Pancreas (tissue), 10 donors: ENCODE measurements at regions of chr15 and their contacts with region 1.

Region 1: DNA sequence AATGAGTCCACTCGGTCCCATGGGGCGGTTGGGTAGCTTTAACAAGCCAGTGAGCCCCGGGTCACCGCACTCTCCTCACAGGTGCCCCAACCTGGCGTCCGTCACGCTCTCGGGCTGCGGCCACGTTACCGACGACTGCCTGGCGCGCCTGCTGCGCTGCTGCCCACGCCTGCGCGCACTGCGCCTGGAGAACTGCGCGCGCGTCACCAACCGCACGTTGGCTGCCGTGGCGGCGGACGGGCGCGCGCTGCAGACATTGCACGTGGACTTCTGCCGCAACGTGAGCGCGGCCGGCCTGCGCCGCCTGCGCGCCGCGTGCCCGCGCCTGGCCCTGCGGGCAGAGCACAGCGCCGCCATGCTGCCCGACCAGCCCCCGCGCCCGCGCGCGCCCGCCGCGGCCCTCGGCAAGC is 3.4 kb downstream of the FBXL22 start:
- DNase-seq: peak; percentile 87 to 97 (median 93)
- ATAC-seq: peak; percentile 71 to 86 (median 81)
- H3K4me3 ChIP-seq: peak overlapping the region; percentile 64 to 86 (median 65)
- H3K27ac ChIP-seq: peak overlapping the region; percentile 83 to 94 (median 91)
- H3K4me1 ChIP-seq: peaks cover 0 to 10% (median 4%) of the 10 kb centered on the region in 3 donors
- H3K27me3 ChIP-seq: no peaks in the 10 kb centered on the region
- CTCF ChIP-seq: no peak

Region 2: DNA sequence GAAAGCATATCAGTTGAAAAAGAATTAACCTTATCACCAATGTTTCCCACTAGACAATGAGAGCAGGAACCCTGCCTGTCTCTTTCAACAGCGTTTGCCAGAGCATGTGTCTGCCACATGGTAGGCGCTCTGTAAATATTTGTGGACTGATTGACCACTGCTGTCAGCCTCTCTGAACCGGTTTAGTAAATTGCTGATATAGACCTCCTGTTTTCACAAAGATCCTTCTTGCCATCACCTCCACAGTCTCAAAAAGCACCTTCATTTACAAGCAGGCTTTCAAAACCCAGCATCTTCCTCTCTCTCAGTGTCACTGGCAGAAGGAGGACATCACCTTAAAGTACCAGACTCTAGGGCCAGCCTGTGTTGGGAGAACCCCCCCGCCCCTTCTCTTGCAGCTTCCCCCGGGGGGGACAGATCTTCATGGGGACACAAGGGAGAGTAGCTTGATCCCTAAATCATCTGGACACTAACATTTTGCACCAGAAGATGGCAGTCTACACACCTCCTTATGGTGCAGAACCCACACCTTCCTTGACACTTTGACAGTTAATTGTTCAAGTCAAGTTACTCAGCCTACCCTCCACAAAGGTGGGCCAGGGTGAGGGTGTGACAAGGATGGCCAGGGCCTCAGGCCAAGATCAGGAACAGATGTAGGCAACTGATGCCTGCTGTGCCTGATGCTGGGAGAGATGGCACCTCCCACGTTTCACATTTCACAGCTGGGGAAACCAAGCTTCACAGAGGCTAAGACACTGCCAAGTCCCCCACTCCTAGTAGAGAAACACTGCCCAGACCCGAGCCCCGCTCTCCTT is 134.0 kb before region 1 on chr15:
- intact Hi-C with region 1: loop called in 2 of 3 experiments (anchors 5 to 10 kb)
- DNase-seq: peak in 2 of 6 donors; percentile 34 to 49
- ATAC-seq: peak; percentile 56 to 86 (median 84)
- H3K4me3 ChIP-seq: no peak overlapping the region
- H3K27ac ChIP-seq: no peak overlapping the region
- H3K4me1 ChIP-seq: peaks cover 4 to 17% (median 10%) of the 10 kb centered on the region in 3 donors
- H3K27me3 ChIP-seq: no peaks in the 10 kb centered on the region
- CTCF ChIP-seq: peak in 3 of 4 donors; percentile 48 to 57 (median 52)

Region 3: DNA sequence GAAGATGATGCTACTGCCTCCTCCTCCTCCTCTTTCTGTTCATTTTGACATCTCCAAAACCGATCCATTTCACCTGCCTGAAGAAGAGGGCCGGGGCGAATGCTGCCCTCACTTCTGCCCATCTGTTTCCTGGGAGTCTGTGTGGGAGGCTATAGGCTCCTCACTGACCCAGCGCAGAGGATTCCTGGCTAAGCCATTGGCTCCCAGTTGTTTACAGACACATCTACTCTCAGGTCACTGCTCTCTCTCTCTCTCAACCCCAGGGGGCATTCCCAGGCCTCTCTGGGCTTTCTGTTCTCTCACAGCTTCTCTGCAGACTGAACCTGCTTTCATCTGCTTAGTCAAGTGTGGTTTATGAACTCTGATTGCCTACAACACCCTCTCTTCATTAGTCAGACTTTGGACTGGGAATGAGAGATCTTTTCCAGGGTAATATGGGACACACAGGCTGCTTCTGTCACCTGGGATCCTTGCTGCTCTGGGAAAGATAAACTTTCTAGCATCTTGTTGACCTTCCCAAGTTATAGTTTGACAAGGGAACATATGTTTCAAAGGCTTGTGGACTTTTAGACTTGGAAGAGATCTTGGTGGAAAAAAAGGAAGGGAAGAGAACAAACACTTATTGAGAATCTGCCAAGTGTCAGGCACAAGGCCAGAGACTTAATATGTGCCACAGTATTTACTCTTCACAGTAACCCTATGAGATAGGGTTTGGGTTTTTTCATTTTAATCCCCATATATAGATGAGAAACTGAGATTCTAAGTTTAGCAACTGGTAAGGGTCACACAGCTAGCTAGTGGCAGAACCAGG is 126.4 kb before region 1 on chr15:
- intact Hi-C with region 1: loop called in 2 of 3 experiments (anchors 5 to 10 kb)
- DNase-seq: peak in 3 of 6 donors; percentile 24 to 44 (median 28)
- ATAC-seq: peak; percentile 77 to 82 (median 79)
- H3K4me3 ChIP-seq: no peak overlapping the region
- H3K27ac ChIP-seq: peak overlapping the region in 2 of 4 donors; percentile 63 to 68
- H3K4me1 ChIP-seq: peaks cover 17 to 25% (median 18%) of the 10 kb centered on the region in 3 donors
- H3K27me3 ChIP-seq: no peaks in the 10 kb centered on the region
- CTCF ChIP-seq: no peak

Region 4: GRCh38 chr15:63497642-63498467 is 102.8 kb before region 1 on chr15:
- intact Hi-C with region 1: loop called in 1 of 3 experiments (anchors 10 kb)
- DNase-seq: peak in 1 of 6 donors; percentile 62
- ATAC-seq: no peak
- H3K4me3 ChIP-seq: no peak overlapping the region
- H3K27ac ChIP-seq: peak overlapping the region in 2 of 4 donors; percentile 7 to 33
- H3K4me1 ChIP-seq: peaks cover 20 to 46% (median 31%) of the 10 kb centered on the region in 3 donors
- H3K27me3 ChIP-seq: no peaks in the 10 kb centered on the region
- CTCF ChIP-seq: no peak

Region 5: GRCh38 chr15:63522225-63522578 is 78.4 kb before region 1 on chr15:
- intact Hi-C with region 1: no loop called
- DNase-seq: no peak
- ATAC-seq: peak in 1 of 4 donors; percentile 31
- H3K4me3 ChIP-seq: no peak overlapping the region
- H3K27ac ChIP-seq: no peak overlapping the region
- H3K4me1 ChIP-seq: peaks cover 45 to 57% (median 55%) of the 10 kb centered on the region in 3 donors
- H3K27me3 ChIP-seq: no peaks in the 10 kb centered on the region
- CTCF ChIP-seq: no peak

Region 6: DNA sequence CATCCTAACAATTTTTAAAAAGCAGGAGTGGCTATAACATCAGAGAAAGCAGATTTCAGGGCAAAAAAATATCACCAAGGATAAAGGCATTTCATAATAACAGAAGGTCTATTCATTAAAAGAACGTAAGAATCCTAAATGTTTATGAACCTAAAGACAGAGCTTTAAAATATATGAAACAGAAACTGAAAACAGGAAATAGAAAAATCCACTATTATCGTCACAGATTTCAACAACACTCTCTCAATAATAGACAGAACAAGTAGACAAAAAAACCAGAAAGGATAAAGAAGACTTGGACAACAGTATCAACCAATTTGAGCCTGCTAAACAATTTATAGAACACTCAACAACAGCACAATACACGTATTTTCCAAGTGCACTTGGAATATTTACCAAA is 68.0 kb after region 1 on chr15:
- intact Hi-C with region 1: no loop called
- DNase-seq: no peak
- ATAC-seq: no peak
- H3K4me3 ChIP-seq: no peak overlapping the region
- H3K27ac ChIP-seq: no peak overlapping the region
- H3K4me1 ChIP-seq: no peaks in the 10 kb centered on the region
- H3K27me3 ChIP-seq: no peaks in the 10 kb centered on the region
- CTCF ChIP-seq: no peak

Region 7: DNA sequence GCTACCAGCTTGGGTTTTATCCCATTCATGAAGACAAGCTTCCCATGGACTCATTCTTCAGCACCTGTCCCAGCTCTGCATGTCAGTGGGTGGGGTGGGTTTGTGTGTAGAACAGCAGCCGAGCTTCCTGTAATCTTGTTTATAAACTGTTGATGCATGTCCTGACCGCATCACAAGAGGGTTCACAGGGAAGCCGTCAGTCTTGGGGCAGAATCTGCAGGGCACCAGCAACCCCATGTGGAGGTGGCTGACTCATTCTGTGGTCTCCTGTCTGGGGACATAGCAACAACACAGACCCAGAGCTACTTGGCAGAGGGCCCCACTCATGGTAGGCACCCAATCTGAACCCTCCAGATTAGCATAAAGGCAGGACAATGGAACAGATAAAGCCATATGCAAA is 410.1 kb after region 1 on chr15:
- intact Hi-C with region 1: no loop called
- DNase-seq: peak in 5 of 6 donors; percentile 40 to 85 (median 65)
- ATAC-seq: peak; percentile 69 to 84 (median 75)
- H3K4me3 ChIP-seq: no peak overlapping the region
- H3K27ac ChIP-seq: no peak overlapping the region
- H3K4me1 ChIP-seq: peaks cover 11 to 23% (median 22%) of the 10 kb centered on the region in 3 donors
- H3K27me3 ChIP-seq: no peaks in the 10 kb centered on the region
- CTCF ChIP-seq: no peak

Region 8: GRCh38 chr15:64067564-64068030 is 467.0 kb after region 1 on chr15:
- intact Hi-C with region 1: loop called in 1 of 3 experiments (anchors 10 kb)
- DNase-seq: peak in 5 of 6 donors; percentile 53 to 80 (median 67)
- ATAC-seq: peak; percentile 64 to 79 (median 74)
- H3K4me3 ChIP-seq: no peak overlapping the region
- H3K27ac ChIP-seq: no peak overlapping the region
- H3K4me1 ChIP-seq: peaks cover 12 to 32% (median 23%) of the 10 kb centered on the region in 3 donors
- H3K27me3 ChIP-seq: no peaks in the 10 kb centered on the region
- CTCF ChIP-seq: peak; percentile 60 to 82 (median 75)